ENCODE measurements at regions of chr11 and their contacts with region 1.

Region 1: DNA sequence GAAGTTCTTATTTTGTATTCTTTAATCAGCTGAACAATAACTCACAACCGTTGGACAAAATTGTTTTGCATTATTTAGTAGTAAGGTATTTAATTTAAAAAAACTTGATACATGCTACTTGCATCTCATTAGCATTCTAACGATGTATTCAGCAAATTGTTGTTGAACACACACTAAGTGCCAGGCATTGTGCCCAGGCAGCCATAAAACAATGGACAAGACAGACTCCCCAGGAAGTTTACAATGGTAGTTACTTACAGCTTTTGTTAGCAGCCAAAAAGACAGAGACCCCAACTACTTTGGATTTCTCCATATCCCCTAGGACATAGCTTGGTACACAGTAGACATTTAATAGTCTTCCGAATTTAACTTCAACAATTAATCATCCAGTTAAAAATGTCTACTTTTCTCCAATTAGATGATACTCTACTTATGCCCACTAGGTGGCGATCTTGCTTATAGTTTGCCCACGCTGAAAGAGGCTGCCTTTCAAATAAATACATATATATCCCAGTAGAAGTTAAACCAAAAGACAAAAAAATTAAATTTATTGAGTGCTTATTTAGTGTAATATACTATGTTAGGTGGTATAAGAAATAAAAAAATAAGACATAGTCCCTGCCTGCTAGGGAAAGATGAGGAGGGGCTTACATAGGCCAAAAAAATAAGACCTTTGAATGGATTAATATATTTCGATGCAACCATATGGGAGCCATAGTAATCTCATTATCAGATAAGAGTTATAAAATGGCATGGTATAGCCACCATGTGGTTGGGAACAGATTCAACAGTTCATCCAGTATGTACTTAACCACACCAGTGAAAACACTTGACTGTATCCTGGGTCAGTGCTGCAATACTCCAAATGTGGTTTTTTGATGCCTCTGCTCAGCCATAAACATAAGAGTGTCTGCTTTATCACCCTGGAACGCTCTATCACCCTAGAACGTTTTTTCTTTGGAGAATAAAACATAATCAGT is 2.0 kb upstream of the FJX1 start:
- DNase-seq: peak; percentile 25
- H3K4me3 Mint-ChIP-seq: no peak overlapping the region
- H3K27ac Mint-ChIP-seq: no peak overlapping the region
- H3K4me1 Mint-ChIP-seq: peaks cover 13% of the 10 kb centered on the region
- H3K27me3 Mint-ChIP-seq: peaks cover 47% of the 10 kb centered on the region

Region 2: GRCh38 chr11:35605711-35606110 is 10.5 kb before region 1 on chr11:
- CTCF ChIA-PET with region 1: interaction called, 10 read pairs
- DNase-seq: no peak
- H3K4me3 Mint-ChIP-seq: no peak overlapping the region
- H3K27ac Mint-ChIP-seq: no peak overlapping the region
- H3K4me1 Mint-ChIP-seq: no peaks in the 10 kb centered on the region
- H3K27me3 Mint-ChIP-seq: peaks cover 18% of the 10 kb centered on the region

Region 3: GRCh38 chr11:36265793-36266628 is 649.8 kb after region 1 on chr11:
- CTCF ChIA-PET with region 1: interaction called, 33 read pairs
- DNase-seq: peak; percentile 68
- H3K4me3 Mint-ChIP-seq: no peak overlapping the region
- H3K27ac Mint-ChIP-seq: no peak overlapping the region
- H3K4me1 Mint-ChIP-seq: no peaks in the 10 kb centered on the region
- H3K27me3 Mint-ChIP-seq: peaks cover 25% of the 10 kb centered on the region